ENCODE measurements at regions of chr18 and their contacts with region 1.

Region 1: DNA sequence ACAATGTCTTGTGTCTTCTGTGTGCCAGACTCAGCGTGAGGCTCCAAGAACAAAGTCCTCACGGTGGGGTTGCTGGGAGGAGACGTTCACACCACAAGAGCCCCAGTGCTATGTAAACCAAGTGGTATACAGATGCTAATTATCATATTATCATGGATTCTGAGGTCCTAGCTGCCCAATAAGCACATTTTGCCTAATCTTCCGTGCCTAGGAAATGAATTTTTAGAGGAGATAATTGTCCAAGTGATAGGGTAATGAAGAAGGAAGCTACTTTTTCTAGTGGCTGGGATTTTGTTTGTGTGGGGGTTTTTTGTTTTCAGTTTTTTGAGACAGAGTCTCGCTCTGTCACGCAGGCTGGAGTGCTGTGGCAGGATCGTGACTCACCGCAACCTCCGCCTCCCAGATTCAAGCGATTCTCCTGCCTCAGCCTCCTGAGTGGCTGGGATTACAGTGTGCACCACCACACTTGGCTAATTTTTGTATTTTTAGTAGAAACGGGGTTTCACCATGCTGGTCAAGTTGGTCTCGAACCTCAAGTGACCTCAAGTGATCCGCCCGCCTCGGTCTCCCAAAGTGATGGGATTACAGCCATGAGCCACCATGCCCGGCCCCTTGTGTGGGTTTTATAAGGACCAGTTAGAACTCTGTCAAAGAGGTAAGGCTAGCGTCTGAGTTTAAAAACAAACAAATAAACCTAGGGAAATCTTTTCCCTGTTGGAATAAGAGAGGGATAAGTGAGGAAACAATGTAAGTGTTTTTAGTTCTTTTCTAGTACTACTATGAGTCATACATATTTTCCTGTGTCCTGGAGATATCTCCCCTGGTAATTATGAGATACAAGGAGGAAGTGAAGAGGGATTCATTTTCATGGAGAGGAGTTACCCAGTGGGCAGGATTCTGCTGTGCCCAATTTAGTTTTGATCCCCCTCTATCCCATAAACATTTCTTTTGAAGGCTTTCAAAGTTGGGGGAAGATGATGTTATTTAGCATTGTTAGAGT is 9.5 kb upstream of the SMAD7 start:
- DNase-seq: no peak
- ATAC-seq: peak in 3 of 4 donors; percentile 14 to 52 (median 44)
- H3K4me3 ChIP-seq: no peak overlapping the region
- H3K27ac ChIP-seq: no peak overlapping the region
- H3K4me1 ChIP-seq: no peaks in the 10 kb centered on the region
- H3K27me3 ChIP-seq: no peaks in the 10 kb centered on the region
- CTCF ChIP-seq: no peak
- POLR2A ChIP-seq: no peak

Region 2: DNA sequence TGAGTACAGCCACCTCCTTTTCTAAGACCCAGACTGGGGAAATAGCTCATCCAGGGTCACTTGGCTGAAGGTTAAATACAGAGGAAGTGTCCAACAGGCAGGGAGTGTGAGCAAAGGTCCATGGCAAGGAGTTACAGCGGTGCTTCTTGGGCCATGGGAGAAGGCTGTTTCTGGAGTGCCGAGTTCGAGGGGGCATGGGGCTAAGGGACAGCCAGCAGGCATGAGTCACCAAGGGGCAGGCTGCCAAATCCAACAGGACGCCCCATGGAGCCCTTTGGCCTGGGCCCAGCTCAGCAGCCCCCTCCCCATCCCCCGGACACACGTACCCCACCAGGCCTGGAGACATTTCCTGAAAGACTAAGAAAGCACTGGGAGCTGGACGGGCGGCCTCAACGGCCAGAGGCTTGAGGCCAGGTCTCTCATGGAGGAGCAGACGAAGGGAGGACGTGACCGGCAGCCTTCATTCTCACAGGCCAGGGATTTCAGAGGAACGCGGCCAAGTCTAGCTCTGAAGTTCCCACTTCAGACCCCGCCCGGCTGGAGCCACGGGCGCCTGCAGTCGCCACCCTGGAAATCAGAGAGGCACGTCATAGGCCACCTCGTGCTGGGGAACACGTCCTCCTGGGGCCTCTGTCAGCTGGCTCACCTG is 169.9 kb before region 1 on chr18:
- intact Hi-C with region 1: loop called in 1 of 2 experiments (anchors 10 kb)
- DNase-seq: peak; percentile 86 to 93 (median 88)
- ATAC-seq: peak; percentile 74 to 84 (median 79)
- H3K4me3 ChIP-seq: no peak overlapping the region
- H3K27ac ChIP-seq: peak overlapping the region; percentile 8 to 83 (median 47)
- H3K4me1 ChIP-seq: peaks cover 0 to 7% (median 0%) of the 10 kb centered on the region in 4 donors
- H3K27me3 ChIP-seq: no peaks in the 10 kb centered on the region
- CTCF ChIP-seq: no peak
- POLR2A ChIP-seq: no peak

Measured in right lobe of liver (tissue), 6 donors.